ENCODE measurements at regions of chr7 and their contacts with region 1.

Region 1: GRCh38 chr7:106329971-106330733 is 45.4 kb upstream of the NAMPT start:
- DNase-seq: no peak
- ATAC-seq: no peak
- H3K4me3 ChIP-seq: no peak overlapping the region
- H3K27ac ChIP-seq: no peak overlapping the region
- H3K4me1 ChIP-seq: no peaks in the 10 kb centered on the region
- H3K27me3 ChIP-seq: no peaks in the 10 kb centered on the region
- CTCF ChIP-seq: no peak
- EP300 ChIP-seq: no peak
- POLR2A ChIP-seq: no peak
- RAD21 ChIP-seq: no peak

Region 2: DNA sequence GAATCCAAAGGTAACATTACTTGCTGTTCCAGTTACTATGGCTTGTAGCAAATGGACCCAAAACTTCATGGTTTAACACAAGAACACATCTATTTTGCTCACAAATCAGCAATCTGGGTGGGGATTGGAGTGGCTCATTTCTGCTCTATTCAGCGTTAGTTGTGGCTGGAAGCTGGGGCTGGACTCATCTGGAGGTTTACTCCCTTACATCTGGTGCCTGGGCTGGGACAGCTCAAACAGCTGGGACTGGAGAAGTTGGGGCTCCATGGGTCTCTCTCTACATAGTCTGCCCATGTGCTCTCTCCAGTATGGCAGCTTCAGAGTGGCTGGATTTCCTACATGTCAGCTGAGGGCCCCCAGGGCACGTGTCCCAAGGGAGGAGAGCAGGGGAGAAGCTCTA is 11.7 kb before region 1 on chr7:
- CTCF ChIA-PET with region 1: interaction called, 3 read pairs
- POLR2A ChIA-PET with region 1: no interaction called
- RAD21 ChIA-PET with region 1: interaction called, 3 read pairs
- SMC1A ChIA-PET with region 1: interaction called, 14 read pairs
- in situ Hi-C with region 1: no loop called
- intact Hi-C with region 1: no loop called
- DNase-seq: no peak
- ATAC-seq: no peak
- H3K4me3 ChIP-seq: no peak overlapping the region
- H3K27ac ChIP-seq: no peak overlapping the region
- H3K4me1 ChIP-seq: peaks cover 3% of the 10 kb centered on the region; the same call in 1 of the 2 replicates
- H3K27me3 ChIP-seq: no peaks in the 10 kb centered on the region
- CTCF ChIP-seq: no peak
- EP300 ChIP-seq: no peak
- POLR2A ChIP-seq: no peak
- RAD21 ChIP-seq: no peak